OCI-LY7 (cell line): ENCODE measurements at regions of chr2 and their contacts with region 1.

Region 1: DNA sequence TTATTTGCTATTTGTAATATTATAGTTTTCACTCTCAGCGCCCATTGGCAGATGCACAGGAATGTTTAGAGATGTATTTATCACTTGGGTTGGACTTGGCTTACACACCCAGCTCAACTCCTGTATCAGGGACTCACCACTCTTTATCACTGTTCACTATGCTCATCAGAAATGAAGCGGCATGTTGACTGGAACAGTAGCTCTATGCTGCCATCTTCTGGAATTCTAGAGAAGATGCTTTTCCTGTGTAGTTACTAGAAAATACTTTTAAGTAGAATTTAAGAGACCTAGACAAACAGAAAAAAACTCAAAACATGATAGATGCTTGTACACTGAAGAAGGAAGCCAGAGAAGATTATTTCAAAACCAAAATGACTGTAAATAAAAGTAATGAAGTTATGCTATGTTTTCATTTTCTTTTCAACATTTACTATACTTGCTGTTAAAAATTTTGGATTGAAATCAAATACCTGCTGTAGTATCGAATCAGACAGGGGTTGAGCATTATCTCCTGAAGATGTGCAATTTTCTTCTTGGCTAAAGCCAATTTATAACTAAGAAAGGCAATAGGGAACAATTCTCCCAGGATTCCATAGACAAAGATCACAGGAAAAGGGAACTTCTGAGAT is 47.4 kb upstream of the NXPH2 start:
- DNase-seq: peak; percentile 58
- H3K4me3 ChIP-seq: no peak overlapping the region
- H3K27ac ChIP-seq: no peak overlapping the region
- H3K4me1 ChIP-seq: no peaks in the 10 kb centered on the region
- CTCF ChIP-seq: peak; percentile 85

Region 2: GRCh38 chr2:137865954-137866540 is 961.5 kb before region 1 on chr2:
- CTCF ChIA-PET with region 1: no interaction called
- POLR2A ChIA-PET with region 1: no interaction called
- intact Hi-C with region 1: loop called (anchors 2 kb)
- DNase-seq: peak; percentile 53
- H3K4me3 ChIP-seq: no peak overlapping the region
- H3K27ac ChIP-seq: no peak overlapping the region
- H3K4me1 ChIP-seq: no peaks in the 10 kb centered on the region
- CTCF ChIP-seq: peak; percentile 82

Region 3: GRCh38 chr2:137910641-137911040 is 916.9 kb before region 1 on chr2:
- CTCF ChIA-PET with region 1: no interaction called
- POLR2A ChIA-PET with region 1: interaction called, 3 read pairs
- intact Hi-C with region 1: loop called (anchors 1 kb)
- DNase-seq: peak; percentile 11
- H3K4me3 ChIP-seq: no peak overlapping the region
- H3K27ac ChIP-seq: no peak overlapping the region
- H3K4me1 ChIP-seq: no peaks in the 10 kb centered on the region
- CTCF ChIP-seq: peak; percentile 78

Region 4: DNA sequence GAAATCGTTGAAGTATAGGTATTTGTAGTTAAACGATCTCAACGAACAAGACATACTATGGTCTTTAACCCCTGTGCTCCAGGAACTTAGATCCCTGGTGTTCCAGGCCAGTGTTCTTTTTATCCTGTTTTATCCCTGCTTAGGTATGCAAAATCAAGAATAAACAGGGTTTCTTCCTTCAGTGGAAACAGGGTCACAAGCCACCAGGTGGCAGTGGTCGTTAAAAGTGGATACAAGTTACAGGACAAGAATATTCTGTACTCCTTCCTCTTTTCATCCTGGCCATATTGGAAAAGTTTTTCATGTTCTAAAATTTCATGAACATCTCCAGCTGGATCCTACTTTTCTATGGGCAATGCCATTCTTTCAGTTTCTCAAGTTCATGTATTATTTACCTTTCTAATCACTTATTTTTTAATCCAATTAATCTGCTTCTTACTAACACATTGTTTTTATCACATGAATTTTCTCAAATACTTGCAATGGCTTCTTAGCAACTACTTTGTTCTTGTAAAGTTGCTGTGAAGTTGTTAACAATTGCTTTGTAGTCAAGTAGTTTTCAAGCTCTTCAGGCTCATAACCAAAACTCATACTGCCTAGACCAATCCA is 879.7 kb before region 1 on chr2:
- CTCF ChIA-PET with region 1: no interaction called
- POLR2A ChIA-PET with region 1: no interaction called
- intact Hi-C with region 1: loop called (anchors 10 kb)
- DNase-seq: peak; percentile 27
- H3K4me3 ChIP-seq: no peak overlapping the region
- H3K27ac ChIP-seq: no peak overlapping the region
- H3K4me1 ChIP-seq: no peaks in the 10 kb centered on the region
- CTCF ChIP-seq: peak; percentile 78

Region 5: DNA sequence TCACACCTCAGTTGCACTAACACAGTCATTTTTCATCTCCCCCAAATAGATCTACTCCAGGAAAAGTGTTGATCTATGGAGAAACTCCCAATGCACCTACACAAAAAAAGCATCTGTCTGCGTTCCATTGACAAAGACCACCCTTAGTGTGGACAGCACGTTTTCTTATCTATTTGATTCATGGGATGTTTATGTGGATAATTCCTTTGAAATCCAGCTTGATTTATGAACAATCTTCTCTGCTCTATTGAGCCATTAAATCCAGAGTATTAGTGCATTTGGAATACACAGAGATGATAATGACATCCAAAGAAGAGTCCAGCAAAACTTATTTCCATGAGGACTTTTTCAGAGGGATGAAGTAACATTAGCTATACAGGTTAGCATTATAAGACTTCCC is 1174.6 kb after region 1 on chr2:
- CTCF ChIA-PET with region 1: no interaction called
- POLR2A ChIA-PET with region 1: no interaction called
- intact Hi-C with region 1: no loop called
- DNase-seq: no peak
- H3K4me3 ChIP-seq: no peak overlapping the region
- H3K27ac ChIP-seq: no peak overlapping the region
- H3K4me1 ChIP-seq: no peaks in the 10 kb centered on the region
- CTCF ChIP-seq: no peak